H1 (cell line): ENCODE measurements at regions of chr5 and their contacts with region 1.

Region 1: DNA sequence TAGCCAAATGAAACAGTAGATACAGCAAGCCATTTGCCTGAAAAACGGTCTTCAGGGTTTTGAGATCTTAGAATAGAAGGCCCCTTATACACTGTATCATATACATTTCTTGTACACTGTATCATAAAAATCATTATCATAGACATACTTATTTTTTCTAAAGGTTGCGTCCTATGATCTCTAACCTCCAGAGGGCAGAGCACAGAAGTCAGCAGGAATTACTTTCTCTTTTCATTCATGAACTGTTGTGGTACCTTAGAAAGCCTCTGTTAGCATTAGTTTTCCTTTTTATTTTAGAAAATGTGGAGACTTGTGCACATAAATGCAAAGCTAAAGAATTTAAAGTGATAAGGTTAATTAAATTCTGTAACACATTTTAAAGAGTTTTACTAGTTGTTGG is 115.4 kb downstream of the OXCT1 start:
- DNase-seq: no peak
- H3K4me3 ChIP-seq: no peak overlapping the region
- H3K27ac ChIP-seq: no peak overlapping the region
- H3K4me1 ChIP-seq: no peaks in the 10 kb centered on the region
- H3K27me3 ChIP-seq: no peaks in the 10 kb centered on the region
- CTCF ChIP-seq: peak in 1 of 3 experiments; percentile 28; a peak in 1 of 4 replicates
- EP300 ChIP-seq: no peak
- POLR2A ChIP-seq: no peak
- RAD21 ChIP-seq: 0 out of 4 replicates have a peak, but pooled peaks of 1 of the 2 experiments have one; percentile 2

Region 2: DNA sequence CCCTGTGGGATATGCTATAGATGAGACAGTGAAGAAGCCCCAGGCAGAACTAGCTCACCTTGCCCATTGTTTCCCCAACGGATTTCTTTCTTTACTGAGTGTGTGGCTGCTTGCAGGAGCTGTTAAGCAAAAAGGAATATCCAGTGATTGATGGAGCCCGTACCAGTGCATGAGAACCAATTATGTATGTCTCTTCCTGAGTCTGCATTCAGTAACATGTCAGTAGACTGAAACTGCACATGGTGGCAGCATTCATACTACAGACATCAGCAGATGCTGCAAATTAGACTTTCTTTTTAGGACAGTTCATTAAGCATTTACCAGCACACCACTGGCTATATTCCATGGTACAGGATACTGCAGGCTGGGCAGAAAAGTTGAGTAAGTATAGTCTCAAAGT is 154.1 kb before region 1 on chr5:
- CTCF ChIA-PET with region 1: no interaction called
- POLR2A ChIA-PET with region 1: no interaction called
- DNase-seq: no peak
- H3K4me3 ChIP-seq: no peak overlapping the region
- H3K27ac ChIP-seq: no peak overlapping the region
- H3K4me1 ChIP-seq: no peaks in the 10 kb centered on the region
- H3K27me3 ChIP-seq: no peaks in the 10 kb centered on the region
- CTCF ChIP-seq: no peak
- EP300 ChIP-seq: no peak
- POLR2A ChIP-seq: no peak
- RAD21 ChIP-seq: no peak

Region 3: DNA sequence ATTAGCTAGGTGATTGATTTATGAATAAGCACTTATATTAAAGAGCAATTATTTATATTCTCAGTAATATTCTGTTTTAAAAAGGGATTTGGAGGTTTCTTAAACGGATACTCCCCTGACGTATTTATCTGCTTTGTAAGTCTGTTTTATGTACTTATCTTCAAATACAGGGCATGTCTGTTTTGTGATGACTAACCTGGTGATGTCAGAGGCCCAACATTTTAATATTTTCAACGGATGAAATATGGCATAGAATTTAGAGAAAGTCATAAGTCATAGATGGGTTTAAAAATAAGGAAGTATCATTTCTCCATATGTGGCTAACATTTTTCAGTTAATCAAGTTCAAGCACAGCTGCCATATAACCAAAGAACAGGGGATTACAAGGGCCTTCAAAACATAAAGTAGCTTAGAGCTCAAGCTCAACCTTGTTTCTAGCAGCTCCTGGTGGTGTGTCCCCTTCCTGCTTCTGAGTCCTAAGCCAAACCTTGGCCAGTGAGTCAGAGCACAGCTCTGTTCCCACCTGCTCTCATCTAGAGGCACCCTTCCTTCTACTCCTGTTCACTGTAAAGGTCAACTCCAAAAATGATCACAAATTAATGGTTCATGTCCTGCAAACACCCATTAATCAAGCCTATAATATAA is 16.0 kb before region 1 on chr5:
- CTCF ChIA-PET with region 1: interaction called, 16 read pairs
- POLR2A ChIA-PET with region 1: no interaction called
- DNase-seq: no peak
- H3K4me3 ChIP-seq: no peak overlapping the region
- H3K27ac ChIP-seq: no peak overlapping the region
- H3K4me1 ChIP-seq: no peaks in the 10 kb centered on the region
- H3K27me3 ChIP-seq: no peaks in the 10 kb centered on the region
- CTCF ChIP-seq: no peak
- EP300 ChIP-seq: no peak
- POLR2A ChIP-seq: no peak
- RAD21 ChIP-seq: no peak

Region 4: DNA sequence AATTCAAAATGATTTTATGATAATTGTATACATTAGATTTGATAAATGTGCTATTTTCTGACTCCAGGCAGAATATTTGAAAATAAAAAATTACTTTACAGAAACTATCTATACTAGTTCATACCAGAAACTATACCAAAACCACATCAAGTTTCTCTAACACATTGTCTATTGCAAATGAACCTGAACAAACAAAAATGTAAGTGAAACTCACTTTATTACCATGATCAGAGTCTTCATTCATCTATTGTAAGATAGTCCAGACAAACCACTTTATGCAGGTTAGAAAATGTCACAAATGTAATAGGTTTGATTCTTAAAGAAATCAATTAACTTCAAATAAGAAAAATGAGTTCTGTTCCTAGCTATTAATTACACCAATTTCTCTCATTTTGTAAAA is 15.9 kb after region 1 on chr5:
- CTCF ChIA-PET with region 1: interaction called, 30 read pairs
- POLR2A ChIA-PET with region 1: no interaction called
- DNase-seq: no peak
- H3K4me3 ChIP-seq: no peak overlapping the region
- H3K27ac ChIP-seq: no peak overlapping the region
- H3K4me1 ChIP-seq: peaks cover 0 to 5% (median 0%) of the 10 kb centered on the region in 4 experiments; a peak in 1 of 7 replicates
- H3K27me3 ChIP-seq: no peaks in the 10 kb centered on the region
- CTCF ChIP-seq: no peak
- EP300 ChIP-seq: no peak
- POLR2A ChIP-seq: no peak
- RAD21 ChIP-seq: no peak